Panc1 (cell line): ENCODE measurements at regions of chr1 and their contacts with region 1.

Region 1: DNA sequence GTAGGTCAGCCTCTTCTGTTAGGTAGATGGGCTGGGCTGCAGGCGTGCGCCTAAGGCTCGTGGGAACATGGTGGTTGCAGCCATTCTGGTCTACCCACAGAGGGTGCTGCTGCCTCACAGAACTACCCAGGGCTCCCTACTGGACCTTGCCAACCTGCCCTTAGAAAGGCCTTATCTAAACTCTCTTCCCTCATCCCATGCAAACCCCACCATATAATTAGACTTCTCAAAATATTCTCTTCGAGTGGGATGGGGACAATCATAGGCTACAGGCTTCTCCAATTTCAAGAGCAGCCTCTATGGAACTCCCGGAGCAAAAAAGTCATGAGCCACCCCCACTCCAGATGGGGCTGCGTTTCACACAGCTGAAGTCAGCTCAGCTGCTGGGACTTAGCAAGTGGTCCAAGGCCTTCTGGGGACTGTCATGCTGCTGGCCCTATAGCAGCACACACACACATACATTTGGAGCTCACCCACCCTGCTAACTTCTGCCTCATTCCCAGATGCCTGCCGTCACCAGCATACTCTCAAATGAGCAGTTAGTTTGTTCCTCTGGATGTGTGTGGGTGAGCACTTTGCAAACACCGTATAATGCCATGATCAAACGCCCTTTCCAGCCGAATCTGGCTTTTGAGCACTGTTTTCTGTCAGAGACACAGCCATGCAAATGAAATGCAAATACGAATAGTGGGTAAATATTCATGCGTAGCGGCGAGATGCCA is 6.1 kb upstream of the SDHB start:
- DNase-seq: peak; percentile 59
- ATAC-seq: peak; percentile 99
- H3K4me3 ChIP-seq: no peak overlapping the region
- H3K27ac ChIP-seq: no peak overlapping the region
- H3K4me1 ChIP-seq: no peaks in the 10 kb centered on the region
- H3K27me3 ChIP-seq: no peaks in the 10 kb centered on the region
- CTCF ChIP-seq: peak; percentile 90

Region 2: GRCh38 chr1:17098446-17099251 is 38.7 kb after region 1 on chr1:
- CTCF ChIA-PET with region 1: no interaction called
- POLR2A ChIA-PET with region 1: no interaction called
- in situ Hi-C with region 1: no loop called
- intact Hi-C with region 1: no loop called
- DNase-seq: no peak
- ATAC-seq: no peak
- H3K4me3 ChIP-seq: no peak overlapping the region
- H3K27ac ChIP-seq: 0 out of 2 replicates have a peak overlapping the region, but pooled peaks have one; percentile 6
- H3K4me1 ChIP-seq: peaks cover 22% of the 10 kb centered on the region
- H3K27me3 ChIP-seq: no peaks in the 10 kb centered on the region
- CTCF ChIP-seq: no peak

Region 3: GRCh38 chr1:17207966-17208418 is 148.1 kb after region 1 on chr1:
- CTCF ChIA-PET with region 1: no interaction called
- POLR2A ChIA-PET with region 1: no interaction called
- in situ Hi-C with region 1: no loop called
- intact Hi-C with region 1: no loop called
- DNase-seq: peak; percentile 61
- ATAC-seq: peak; percentile 71
- H3K4me3 ChIP-seq: no peak overlapping the region
- H3K27ac ChIP-seq: peak overlapping the region; percentile 87
- H3K4me1 ChIP-seq: peaks cover 53% of the 10 kb centered on the region
- H3K27me3 ChIP-seq: no peaks in the 10 kb centered on the region
- CTCF ChIP-seq: no peak

Region 4: DNA sequence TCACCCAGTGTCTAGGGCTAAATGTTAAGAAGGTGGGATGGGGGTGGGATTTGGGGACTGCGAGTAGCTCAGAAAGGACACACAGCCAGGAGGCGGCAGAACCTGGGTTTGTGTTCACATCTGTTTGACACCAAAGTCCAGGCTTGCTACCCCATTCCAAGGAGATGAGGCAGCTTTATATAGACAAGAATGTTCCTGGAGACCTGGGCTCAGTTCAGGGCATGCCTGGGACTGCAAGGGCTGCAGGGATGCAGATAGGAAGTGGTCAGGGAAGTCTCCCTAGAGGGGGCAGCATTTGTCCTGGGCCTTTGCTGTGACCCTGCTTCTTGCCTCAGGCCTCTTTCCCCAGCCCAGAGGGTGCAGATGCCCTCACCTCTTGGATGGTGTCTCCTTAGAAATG is 205.3 kb after region 1 on chr1:
- CTCF ChIA-PET with region 1: no interaction called
- POLR2A ChIA-PET with region 1: no interaction called
- in situ Hi-C with region 1: no loop called
- intact Hi-C with region 1: no loop called
- DNase-seq: no peak
- ATAC-seq: peak; percentile 68
- H3K4me3 ChIP-seq: no peak overlapping the region
- H3K27ac ChIP-seq: no peak overlapping the region
- H3K4me1 ChIP-seq: no peaks in the 10 kb centered on the region
- H3K27me3 ChIP-seq: no peaks in the 10 kb centered on the region
- CTCF ChIP-seq: no peak

Region 5: DNA sequence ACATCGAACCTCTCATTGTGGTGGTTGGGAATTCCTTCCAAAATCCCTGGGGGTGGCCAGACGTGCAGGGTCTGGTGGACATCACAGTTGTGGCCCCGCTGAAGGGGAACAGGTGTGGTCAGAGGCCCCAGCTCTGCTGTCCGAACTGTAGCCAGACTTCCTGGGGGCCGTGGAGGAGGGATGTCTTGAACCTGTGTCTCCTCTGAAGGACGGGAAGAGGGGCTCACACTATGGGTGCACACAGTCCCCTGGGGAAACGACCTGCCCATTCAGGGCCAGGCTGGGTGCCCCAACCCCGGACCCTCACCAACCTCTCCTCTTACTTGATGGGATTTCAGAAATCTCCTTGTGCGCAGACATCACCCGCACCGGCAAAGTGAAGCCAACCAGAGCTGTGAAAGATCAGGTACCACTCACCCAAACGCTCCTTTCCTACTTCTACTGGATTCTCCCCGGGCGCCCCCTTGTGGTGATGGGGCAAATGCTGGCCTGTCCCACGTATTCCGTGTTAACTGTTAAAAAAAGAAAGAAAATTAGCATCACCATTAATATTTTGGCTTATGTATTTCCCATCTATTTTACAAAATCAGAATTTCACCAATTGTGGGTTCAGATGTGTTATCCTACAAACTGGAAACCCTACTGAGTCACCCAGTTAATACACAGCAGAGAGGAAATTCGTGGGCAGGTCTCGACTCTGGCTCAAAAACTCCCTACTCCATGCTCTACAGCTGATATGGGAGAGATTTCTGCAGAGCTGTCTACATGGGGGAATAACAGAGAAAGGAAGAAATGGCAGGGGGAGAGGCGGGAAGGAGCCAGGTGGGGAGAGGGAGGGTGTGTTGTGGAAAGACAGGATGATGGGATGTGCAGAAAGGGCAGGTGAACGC is 276.2 kb after region 1 on chr1:
- CTCF ChIA-PET with region 1: no interaction called
- POLR2A ChIA-PET with region 1: no interaction called
- in situ Hi-C with region 1: no loop called
- intact Hi-C with region 1: loop called (anchors 5 kb)
- DNase-seq: peak; percentile 39
- ATAC-seq: peak; percentile 96
- H3K4me3 ChIP-seq: peak overlapping the region in 1 of 2 experiments; percentile 18; a peak in 1 of 4 replicates
- H3K27ac ChIP-seq: no peak overlapping the region; the same call in 1 of the 2 replicates
- H3K4me1 ChIP-seq: peaks cover 9% of the 10 kb centered on the region; the same call in 1 of the 2 replicates
- H3K27me3 ChIP-seq: no peaks in the 10 kb centered on the region
- CTCF ChIP-seq: peak; percentile 97

Region 6: GRCh38 chr1:17405898-17406759 is 346.2 kb after region 1 on chr1:
- CTCF ChIA-PET with region 1: no interaction called
- POLR2A ChIA-PET with region 1: no interaction called
- in situ Hi-C with region 1: no loop called
- intact Hi-C with region 1: loop called (anchors 5 kb)
- DNase-seq: peak; percentile 45
- ATAC-seq: peak; percentile 91
- H3K4me3 ChIP-seq: no peak overlapping the region
- H3K27ac ChIP-seq: peak overlapping the region; percentile 48; the same call in 1 of the 2 replicates
- H3K4me1 ChIP-seq: peaks cover 18% of the 10 kb centered on the region
- H3K27me3 ChIP-seq: no peaks in the 10 kb centered on the region
- CTCF ChIP-seq: peak; percentile 91